Panc1 (cell line): ENCODE measurements at regions of chr3 and their contacts with region 1.

Region 1: DNA sequence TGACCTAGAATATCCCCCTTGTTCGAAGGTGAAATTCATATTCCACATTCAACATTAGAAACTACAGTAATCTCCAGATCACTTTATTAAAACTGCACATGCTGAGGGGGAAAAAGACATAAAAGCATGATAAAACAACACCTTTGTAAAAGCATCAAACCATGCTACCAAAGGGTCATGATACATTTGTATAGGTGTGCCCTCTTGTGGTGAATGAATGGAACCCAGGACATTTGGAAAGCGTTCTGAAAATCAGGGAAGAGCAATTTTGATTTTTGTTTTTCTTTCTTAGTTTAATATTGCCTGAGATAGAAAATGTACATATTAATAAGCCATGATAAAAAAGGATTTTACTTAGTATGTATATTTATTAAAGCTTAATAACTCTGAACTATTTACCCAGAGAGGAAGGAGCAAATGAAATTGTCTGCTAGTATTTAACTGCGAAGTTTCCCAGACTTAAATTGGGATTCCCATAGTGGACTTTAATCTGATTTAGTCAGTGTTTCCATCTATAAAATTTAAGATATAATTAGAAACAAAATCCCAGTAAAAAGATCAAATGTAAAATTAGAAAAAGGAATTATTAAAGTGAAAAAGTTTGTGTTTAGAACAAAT is 105.8 kb upstream of the ARL6 start:
- DNase-seq: peak; percentile 12
- ATAC-seq: no peak; the same call in 1 of the 2 replicates
- H3K4me3 ChIP-seq: no peak overlapping the region
- H3K27ac ChIP-seq: no peak overlapping the region
- H3K4me1 ChIP-seq: no peaks in the 10 kb centered on the region
- H3K27me3 ChIP-seq: no peaks in the 10 kb centered on the region
- CTCF ChIP-seq: peak; percentile 76; the same call in 1 of the 2 replicates

Region 2: GRCh38 chr3:97306226-97306625 is 352.6 kb before region 1 on chr3:
- CTCF ChIA-PET with region 1: no interaction called
- POLR2A ChIA-PET with region 1: no interaction called
- in situ Hi-C with region 1: no loop called
- intact Hi-C with region 1: loop called (anchors 10 kb)
- DNase-seq: no peak
- ATAC-seq: no peak
- H3K4me3 ChIP-seq: no peak overlapping the region
- H3K27ac ChIP-seq: no peak overlapping the region
- H3K4me1 ChIP-seq: no peaks in the 10 kb centered on the region
- H3K27me3 ChIP-seq: no peaks in the 10 kb centered on the region
- CTCF ChIP-seq: no peak